Left cardiac atrium (tissue), 4 donors: ENCODE measurements at regions of chr3 and their contacts with region 1.

Region 1: DNA sequence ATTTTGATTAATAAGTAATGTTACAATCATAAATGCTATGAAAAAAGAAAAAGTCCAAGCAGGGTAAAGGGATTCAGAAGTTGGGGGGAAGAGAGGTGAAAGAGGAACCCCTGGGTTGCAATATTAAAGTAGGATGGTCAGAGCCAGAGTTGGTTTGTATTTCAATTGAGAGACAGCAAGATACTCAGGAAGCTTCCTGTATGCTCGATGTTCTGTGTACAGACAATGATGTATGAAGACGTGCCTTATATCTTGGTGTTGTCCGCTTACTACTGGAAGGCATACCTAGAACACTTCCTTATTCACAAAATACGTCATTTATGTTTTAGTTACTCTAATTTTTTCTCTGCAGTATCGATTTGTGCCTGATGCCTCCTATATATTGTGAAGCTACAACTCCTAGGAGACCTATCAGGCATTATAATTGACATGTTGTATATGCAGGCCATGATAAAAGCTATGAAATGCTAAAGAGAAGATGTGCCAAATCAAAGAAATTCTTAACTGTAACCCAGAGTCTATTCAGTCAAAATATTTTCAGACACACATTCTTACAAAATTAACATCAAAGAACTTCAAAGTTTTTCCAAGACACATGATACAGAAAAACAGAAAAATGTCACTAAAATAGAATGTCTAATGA is 87.5 kb downstream of the TBL1XR1 start:
- DNase-seq: no peak
- ATAC-seq: no peak

Region 2: GRCh38 chr3:177069514-177070329 is 40.1 kb before region 1 on chr3:
- intact Hi-C with region 1: loop called in 1 of 2 experiments (anchors 10 kb)
- DNase-seq: no peak
- ATAC-seq: peak in 1 of 2 donors; percentile 30

Region 3: DNA sequence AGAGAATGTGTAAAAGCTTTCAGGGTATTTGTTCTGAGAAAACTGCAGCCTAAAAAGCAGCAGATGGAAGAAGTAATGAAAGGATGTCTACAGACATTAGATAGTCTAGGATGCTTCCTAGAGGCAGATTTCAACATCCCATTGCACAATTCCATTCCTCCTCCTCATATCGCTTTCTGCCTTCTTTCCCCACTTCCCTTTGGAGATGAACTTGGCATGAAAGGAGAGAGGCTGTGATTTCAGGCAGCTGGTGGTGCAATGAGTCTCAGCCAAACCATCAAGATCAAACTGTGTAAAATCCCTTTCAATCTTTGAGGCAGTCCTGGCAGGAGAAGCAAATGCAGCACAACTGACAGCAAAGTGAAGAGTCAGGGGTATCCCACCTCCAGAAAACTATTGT is 987.8 kb after region 1 on chr3:
- intact Hi-C with region 1: no loop called
- DNase-seq: peak; percentile 24
- ATAC-seq: peak; percentile 81 to 97